Activated CD4-positive, alpha-beta memory T cell treated with anti-CD3 and anti-CD28 coated beads, Interleukin-2, amount 10 ng/mL, durations not matched to agents 7 days and 5 days (primary cell): ENCODE measurements at regions of chr17 and their contacts with region 1.

Region 1: GRCh38 chr17:73429440-73430164 is 117.8 kb upstream of the CDC42EP4 start:
- DNase-seq: peak; percentile 86
- H3K4me3 Mint-ChIP-seq: no peak overlapping the region
- H3K27ac Mint-ChIP-seq: no peak overlapping the region
- H3K4me1 Mint-ChIP-seq: peaks cover 14% of the 10 kb centered on the region
- H3K27me3 Mint-ChIP-seq: peaks cover 5% of the 10 kb centered on the region

Region 2: DNA sequence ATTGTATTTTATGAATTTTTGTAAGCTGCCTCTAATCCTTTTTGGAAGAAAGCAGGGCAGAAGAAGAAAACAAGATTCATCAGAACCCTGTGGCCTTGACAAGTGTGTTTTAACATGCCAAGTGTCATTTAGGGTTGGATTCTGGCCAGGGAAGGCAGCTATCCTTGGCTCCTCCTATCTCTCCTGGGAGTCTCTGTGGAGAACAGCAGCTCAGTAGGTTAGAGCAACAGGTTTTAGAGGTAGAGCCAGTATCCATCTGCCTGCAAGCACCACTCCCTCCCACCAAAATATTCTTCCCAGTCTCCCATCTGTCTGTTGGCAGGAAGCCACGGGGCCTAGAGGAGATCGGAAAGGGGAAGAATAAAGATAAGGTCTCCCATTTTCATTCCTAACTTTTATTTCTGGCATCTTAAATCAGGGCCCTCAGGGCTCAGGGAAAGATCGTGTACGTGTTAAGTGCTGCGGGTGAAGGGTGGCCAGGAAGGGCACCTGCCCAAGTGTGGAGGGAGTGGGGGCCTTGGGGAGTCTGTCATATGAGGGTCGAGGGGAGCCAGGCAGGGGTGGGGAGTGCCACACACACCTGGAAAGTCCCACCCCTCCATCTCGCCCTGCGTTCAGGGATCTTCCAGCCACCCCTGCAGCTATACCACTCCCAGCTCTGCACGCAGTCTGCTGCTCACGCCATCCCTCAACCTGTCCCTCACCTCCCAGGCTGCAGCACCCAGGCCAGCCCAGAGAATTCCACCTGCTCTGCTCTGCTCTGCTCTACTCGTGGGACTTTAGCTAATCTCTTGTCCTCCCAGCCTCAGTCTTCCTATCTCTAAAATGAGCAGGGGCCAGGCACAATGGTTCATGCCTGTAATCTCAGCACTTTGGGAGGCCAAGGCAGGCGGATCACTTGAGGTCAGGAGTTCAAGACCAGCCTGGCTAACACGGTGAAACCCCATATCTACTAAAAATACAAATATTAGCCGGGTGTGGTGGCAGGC is 150.8 kb before region 1 on chr17:
- CTCF ChIA-PET with region 1: no interaction called
- POLR2A ChIA-PET with region 1: no interaction called
- DNase-seq: no peak
- H3K4me3 Mint-ChIP-seq: no peak overlapping the region
- H3K27ac Mint-ChIP-seq: no peak overlapping the region
- H3K4me1 Mint-ChIP-seq: no peaks in the 10 kb centered on the region
- H3K27me3 Mint-ChIP-seq: no peaks in the 10 kb centered on the region

Region 3: GRCh38 chr17:73410586-73411312 is 18.9 kb before region 1 on chr17:
- CTCF ChIA-PET with region 1: no interaction called
- POLR2A ChIA-PET with region 1: no interaction called
- DNase-seq: no peak
- H3K4me3 Mint-ChIP-seq: no peak overlapping the region
- H3K27ac Mint-ChIP-seq: no peak overlapping the region
- H3K4me1 Mint-ChIP-seq: no peaks in the 10 kb centered on the region
- H3K27me3 Mint-ChIP-seq: no peaks in the 10 kb centered on the region

Region 4: GRCh38 chr17:73710095-73710592 is 280.5 kb after region 1 on chr17:
- CTCF ChIA-PET with region 1: interaction called, 54 read pairs
- POLR2A ChIA-PET with region 1: no interaction called
- DNase-seq: peak; percentile 68
- H3K4me3 Mint-ChIP-seq: no peak overlapping the region
- H3K27ac Mint-ChIP-seq: no peak overlapping the region
- H3K4me1 Mint-ChIP-seq: peaks cover 9% of the 10 kb centered on the region
- H3K27me3 Mint-ChIP-seq: peaks cover 9% of the 10 kb centered on the region

Region 5: GRCh38 chr17:73785958-73786743 is 356.5 kb after region 1 on chr17:
- CTCF ChIA-PET with region 1: no interaction called
- POLR2A ChIA-PET with region 1: no interaction called
- DNase-seq: no peak
- H3K4me3 Mint-ChIP-seq: no peak overlapping the region
- H3K27ac Mint-ChIP-seq: no peak overlapping the region
- H3K4me1 Mint-ChIP-seq: no peaks in the 10 kb centered on the region
- H3K27me3 Mint-ChIP-seq: peaks cover 2% of the 10 kb centered on the region

Region 6: GRCh38 chr17:73956669-73957465 is 527.3 kb after region 1 on chr17:
- CTCF ChIA-PET with region 1: interaction called, 12 read pairs
- POLR2A ChIA-PET with region 1: no interaction called
- DNase-seq: peak; percentile 56
- H3K4me3 Mint-ChIP-seq: no peak overlapping the region
- H3K27ac Mint-ChIP-seq: no peak overlapping the region
- H3K4me1 Mint-ChIP-seq: peaks cover 3% of the 10 kb centered on the region
- H3K27me3 Mint-ChIP-seq: peaks cover 18% of the 10 kb centered on the region

Region 7: GRCh38 chr17:73998653-73999645 is 569.3 kb after region 1 on chr17:
- CTCF ChIA-PET with region 1: interaction called, 10 read pairs
- POLR2A ChIA-PET with region 1: no interaction called
- DNase-seq: peak; percentile 69
- H3K4me3 Mint-ChIP-seq: no peak overlapping the region
- H3K27ac Mint-ChIP-seq: no peak overlapping the region
- H3K4me1 Mint-ChIP-seq: no peaks in the 10 kb centered on the region
- H3K27me3 Mint-ChIP-seq: peaks cover 20% of the 10 kb centered on the region